Activated T-helper 1 cell treated with anti-CD3 and anti-CD28 coated beads, Interleukin-12 subunit alpha, Interleukin-12 subunit beta, Interleukin-2, Interleukin-4 antibody, amounts not matched to agents 30 ng/mL and 10 ng/mL and 1 ng/mL, durations not matched to agents 14 hours and 24 hours and 36 hours (primary cell): ENCODE measurements at regions of chr10 and their contacts with region 1.

Region 1: GRCh38 chr10:30433730-30434272 is at the start of gene MAP3K8:
- DNase-seq: peak; percentile 87
- H3K4me3 Mint-ChIP-seq: peak within 1 kb of the TSS; percentile 94
- H3K27ac Mint-ChIP-seq: peak within 1 kb of the TSS; percentile 88
- H3K4me1 Mint-ChIP-seq: peaks cover 56% of the 10 kb centered on the region
- H3K27me3 Mint-ChIP-seq: no peaks in the 10 kb centered on the region
- total RNA-seq, gene MAP3K8: 34.7 and 37.5 TPM in 2 replicates

Region 2: GRCh38 chr10:29081951-29082699 is 1351.7 kb before region 1 on chr10:
- intact Hi-C with region 1: no loop called
- DNase-seq: no peak
- H3K4me3 Mint-ChIP-seq: no peak overlapping the region
- H3K27ac Mint-ChIP-seq: no peak overlapping the region
- H3K4me1 Mint-ChIP-seq: no peaks in the 10 kb centered on the region
- H3K27me3 Mint-ChIP-seq: peaks cover 2% of the 10 kb centered on the region

Region 3: GRCh38 chr10:29658984-29659965 is 774.5 kb before region 1 on chr10:
- intact Hi-C with region 1: loop called (anchors 10 kb)
- DNase-seq: peak; percentile 73
- H3K4me3 Mint-ChIP-seq: peak overlapping the region; percentile 2
- H3K27ac Mint-ChIP-seq: peak overlapping the region; percentile 37
- H3K4me1 Mint-ChIP-seq: peaks cover 26% of the 10 kb centered on the region
- H3K27me3 Mint-ChIP-seq: peaks cover 48% of the 10 kb centered on the region

Region 4: GRCh38 chr10:30348378-30348776 is 85.4 kb before region 1 on chr10:
- intact Hi-C with region 1: loop called (anchors 1 kb)
- DNase-seq: no peak
- H3K4me3 Mint-ChIP-seq: peak overlapping the region; percentile 93
- H3K27ac Mint-ChIP-seq: peak overlapping the region; percentile 88
- H3K4me1 Mint-ChIP-seq: peaks cover 49% of the 10 kb centered on the region
- H3K27me3 Mint-ChIP-seq: no peaks in the 10 kb centered on the region

Region 5: DNA sequence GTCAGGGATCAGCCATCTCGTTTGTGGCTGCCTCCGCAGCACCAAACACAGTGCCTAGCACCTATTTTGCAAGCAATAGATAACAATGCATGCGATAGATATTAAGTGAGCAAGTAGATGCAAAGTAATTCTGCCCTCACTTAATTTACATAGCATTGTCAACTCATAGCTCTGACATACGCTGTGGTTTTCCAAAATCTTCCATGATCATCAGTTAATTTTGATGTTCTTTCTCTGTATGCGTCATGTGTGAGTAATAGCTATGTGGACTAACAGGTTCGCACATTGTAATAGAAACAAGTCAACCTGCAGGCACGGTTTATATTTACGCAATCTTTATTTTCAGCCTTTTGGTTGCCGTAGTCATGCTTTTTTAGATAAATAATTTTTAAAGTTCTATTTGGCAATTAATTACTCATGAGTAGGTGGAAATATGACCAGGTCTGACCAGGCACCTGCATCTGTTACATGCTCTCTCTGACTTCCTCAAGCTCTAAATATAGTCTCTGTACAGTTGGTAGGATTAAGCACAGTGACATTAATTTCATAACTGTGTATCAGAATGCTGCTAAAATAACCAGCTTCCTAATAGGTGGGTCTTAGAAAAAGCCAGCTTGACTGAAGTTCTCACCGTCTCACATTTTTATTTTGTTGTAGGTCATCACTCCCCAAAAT is 13.5 kb after region 1 on chr10:
- intact Hi-C with region 1: loop called (anchors 1 kb)
- DNase-seq: no peak
- H3K4me3 Mint-ChIP-seq: no peak overlapping the region
- H3K27ac Mint-ChIP-seq: peak overlapping the region; percentile 73
- H3K4me1 Mint-ChIP-seq: peaks cover 55% of the 10 kb centered on the region
- H3K27me3 Mint-ChIP-seq: no peaks in the 10 kb centered on the region

Region 6: DNA sequence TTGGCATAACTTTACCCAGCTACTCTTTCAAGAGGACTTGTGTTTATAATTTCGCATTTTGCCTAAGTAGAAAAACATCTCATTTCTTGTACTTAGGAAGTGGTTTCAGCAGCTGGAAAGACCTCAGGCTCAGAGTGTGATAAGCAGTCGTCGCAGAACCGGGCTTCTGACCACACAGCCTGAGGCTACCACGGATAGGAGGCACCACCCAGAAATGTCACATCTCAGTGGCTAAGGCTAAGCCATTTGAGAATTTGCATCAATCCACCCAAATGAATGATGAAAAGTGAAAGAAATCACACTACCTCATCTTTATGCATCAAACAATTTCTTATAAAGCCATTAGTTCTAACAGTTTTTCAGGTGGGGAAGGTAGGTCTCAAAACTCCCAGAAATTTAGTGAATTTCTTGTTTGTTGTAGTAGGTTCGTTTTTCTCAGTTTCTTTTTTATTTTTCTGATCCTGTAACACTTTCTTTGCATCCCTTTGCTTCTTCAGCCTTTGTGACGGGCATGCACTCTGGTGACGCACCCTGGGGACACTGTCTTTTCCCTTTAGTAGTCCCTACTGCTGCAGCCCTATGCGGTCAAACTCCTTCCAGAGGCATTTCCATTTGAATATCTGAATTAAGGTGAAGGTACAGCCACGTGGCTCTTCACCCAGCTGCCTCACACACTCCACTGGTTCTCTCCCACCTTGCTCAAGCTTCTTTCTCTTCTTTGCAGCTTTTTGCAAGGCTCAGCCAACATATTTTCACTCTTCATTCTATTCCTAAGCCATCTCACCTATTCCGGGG is 68.7 kb after region 1 on chr10:
- intact Hi-C with region 1: loop called (anchors 2 kb)
- DNase-seq: peak; percentile 67
- H3K4me3 Mint-ChIP-seq: peak overlapping the region; percentile 3
- H3K27ac Mint-ChIP-seq: peak overlapping the region; percentile 62
- H3K4me1 Mint-ChIP-seq: peaks cover 81% of the 10 kb centered on the region
- H3K27me3 Mint-ChIP-seq: no peaks in the 10 kb centered on the region

Region 7: GRCh38 chr10:30534465-30535144 is 100.8 kb after region 1 on chr10:
- intact Hi-C with region 1: loop called (anchors 1 kb)
- DNase-seq: peak; percentile 58
- H3K4me3 Mint-ChIP-seq: no peak overlapping the region
- H3K27ac Mint-ChIP-seq: peak overlapping the region; percentile 2
- H3K4me1 Mint-ChIP-seq: peaks cover 49% of the 10 kb centered on the region
- H3K27me3 Mint-ChIP-seq: no peaks in the 10 kb centered on the region

Region 8: GRCh38 chr10:31340343-31340742 is 906.5 kb after region 1 on chr10:
- intact Hi-C with region 1: loop called (anchors 10 kb)
- DNase-seq: no peak
- H3K4me3 Mint-ChIP-seq: no peak overlapping the region
- H3K27ac Mint-ChIP-seq: no peak overlapping the region
- H3K4me1 Mint-ChIP-seq: no peaks in the 10 kb centered on the region
- H3K27me3 Mint-ChIP-seq: no peaks in the 10 kb centered on the region